ENCODE measurements at regions of chr3 and their contacts with region 1.

Region 1: DNA sequence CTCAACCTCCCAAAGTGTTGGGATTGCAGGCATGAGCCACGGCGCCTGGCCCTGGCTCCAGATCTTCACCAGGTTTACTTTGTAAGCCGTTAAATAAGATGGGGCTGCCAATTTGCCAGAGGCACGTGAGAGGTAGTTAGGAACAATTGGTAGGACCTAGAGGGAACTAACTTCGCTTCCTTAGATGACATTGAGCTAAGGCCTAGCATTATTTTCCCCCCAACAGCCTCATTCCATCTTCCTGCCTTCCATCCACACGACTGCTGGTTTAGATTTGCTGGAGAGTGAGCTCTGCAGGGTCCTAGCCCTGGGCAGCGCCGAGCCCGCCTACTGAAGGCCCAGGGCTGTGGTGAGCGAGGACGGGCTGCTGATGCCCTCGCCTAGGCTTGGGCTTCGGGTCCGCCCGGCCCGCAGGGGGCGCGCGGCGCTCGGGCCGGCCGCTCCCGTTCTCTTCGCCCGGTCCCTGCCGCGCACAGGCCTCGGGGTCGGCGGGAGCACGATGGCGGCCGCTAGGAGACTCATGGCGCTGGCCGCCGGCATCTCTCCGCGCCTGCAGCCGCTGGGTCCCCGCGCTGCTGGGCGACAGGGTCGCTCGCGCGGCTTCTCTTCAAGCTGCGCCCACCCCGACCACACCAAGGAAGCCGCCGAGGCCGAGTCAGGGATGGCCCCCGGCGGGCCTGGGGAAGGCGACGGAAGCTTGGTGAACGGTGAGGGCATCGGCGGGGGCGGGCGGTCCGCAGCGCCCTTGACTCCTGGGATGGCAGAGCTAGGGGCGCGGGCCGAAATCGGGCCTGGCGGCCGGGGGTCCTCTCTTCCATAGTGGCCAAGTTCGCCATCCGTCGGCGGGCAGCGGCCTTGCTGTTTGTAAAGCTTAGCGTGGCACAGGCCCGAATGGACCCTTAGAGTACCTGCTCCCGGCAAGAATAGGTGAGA is 21.9 kb downstream of the DHX30 start:
- DNase-seq: peak; percentile 82
- H3K4me3 ChIP-seq: peak overlapping the region; percentile 73 to 93 (median 82)
- H3K27ac ChIP-seq: peak overlapping the region; percentile 61
- H3K4me1 ChIP-seq: peaks cover 5% of the 10 kb centered on the region
- H3K27me3 ChIP-seq: no peaks in the 10 kb centered on the region
- CTCF ChIP-seq: peak; percentile 51 to 70

Region 2: GRCh38 chr3:47781685-47782445 is 42.9 kb before region 1 on chr3 and contains the start of gene SMARCC1:
- CTCF ChIA-PET with region 1: no interaction called
- dilution Hi-C with region 1: no loop called
- in situ Hi-C with region 1: no loop called
- intact Hi-C with region 1: no loop called
- DNase-seq: peak; percentile 98
- H3K4me3 ChIP-seq: peak within 1 kb of the TSS; percentile 89 to 93 (median 89)
- H3K27ac ChIP-seq: peak within 1 kb of the TSS; percentile 88
- H3K4me1 ChIP-seq: peaks cover 13% of the 10 kb centered on the region
- H3K27me3 ChIP-seq: no peaks in the 10 kb centered on the region
- CTCF ChIP-seq: no peak
- total RNA-seq, gene SMARCC1: 52.8 to 94.1 TPM

Region 3: GRCh38 chr3:47802734-47803477 is 21.9 kb before region 1 on chr3 and contains the start of gene DHX30:
- CTCF ChIA-PET with region 1: no interaction called
- dilution Hi-C with region 1: no loop called
- in situ Hi-C with region 1: no loop called
- intact Hi-C with region 1: loop called (anchors 1 kb)
- DNase-seq: peak; percentile 86
- H3K4me3 ChIP-seq: peak within 1 kb of the TSS; percentile 74 to 92 (median 89)
- H3K27ac ChIP-seq: peak within 1 kb of the TSS; percentile 89
- H3K4me1 ChIP-seq: peaks cover 19% of the 10 kb centered on the region
- H3K27me3 ChIP-seq: no peaks in the 10 kb centered on the region
- CTCF ChIP-seq: no peak
- total RNA-seq, gene DHX30: 60.5 to 61.6 TPM